ENCODE measurements at regions of chr12 and their contacts with region 1.

Region 1: GRCh38 chr12:131311764-131312163 is 358.1 kb downstream of the ADGRD1 start:
- DNase-seq: no peak
- ATAC-seq: no peak
- H3K4me3 ChIP-seq: no peak overlapping the region
- H3K27ac ChIP-seq: no peak overlapping the region
- H3K4me1 ChIP-seq: no peaks in the 10 kb centered on the region
- H3K27me3 ChIP-seq: peaks cover 0 to 54% (median 0%) of the 10 kb centered on the region in 9 donors
- CTCF ChIP-seq: no peak
- POLR2A ChIP-seq: no peak

Region 2: DNA sequence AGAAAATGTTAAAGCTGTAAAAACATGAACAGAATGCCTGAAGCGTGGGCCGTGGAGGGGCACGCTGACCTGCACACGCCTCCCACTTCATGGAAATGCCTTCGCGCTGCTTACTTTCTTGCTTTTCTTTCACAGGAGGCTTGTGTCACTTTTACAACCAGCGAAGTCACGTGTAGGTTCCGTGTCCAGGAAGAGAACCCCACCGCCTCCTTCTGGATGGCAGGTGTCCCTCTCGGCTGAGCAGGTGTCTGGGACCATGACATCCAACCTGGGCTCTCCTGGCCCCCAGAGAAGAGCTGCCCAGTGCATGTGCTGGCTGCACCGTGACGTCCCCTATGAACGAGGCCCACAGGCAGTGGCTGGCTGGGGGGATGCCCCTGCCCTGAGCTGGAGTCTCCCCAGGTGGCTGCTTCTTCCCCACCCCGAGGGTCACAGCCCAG is 54.1 kb after region 1 on chr12:
- intact Hi-C with region 1: no loop called
- DNase-seq: peak in 1 of 5 donors; percentile 29
- ATAC-seq: no peak
- H3K4me3 ChIP-seq: no peak overlapping the region
- H3K27ac ChIP-seq: no peak overlapping the region
- H3K4me1 ChIP-seq: no peaks in the 10 kb centered on the region
- H3K27me3 ChIP-seq: peaks cover 0 to 15% (median 0%) of the 10 kb centered on the region in 9 donors
- CTCF ChIP-seq: no peak
- POLR2A ChIP-seq: no peak

Region 3: DNA sequence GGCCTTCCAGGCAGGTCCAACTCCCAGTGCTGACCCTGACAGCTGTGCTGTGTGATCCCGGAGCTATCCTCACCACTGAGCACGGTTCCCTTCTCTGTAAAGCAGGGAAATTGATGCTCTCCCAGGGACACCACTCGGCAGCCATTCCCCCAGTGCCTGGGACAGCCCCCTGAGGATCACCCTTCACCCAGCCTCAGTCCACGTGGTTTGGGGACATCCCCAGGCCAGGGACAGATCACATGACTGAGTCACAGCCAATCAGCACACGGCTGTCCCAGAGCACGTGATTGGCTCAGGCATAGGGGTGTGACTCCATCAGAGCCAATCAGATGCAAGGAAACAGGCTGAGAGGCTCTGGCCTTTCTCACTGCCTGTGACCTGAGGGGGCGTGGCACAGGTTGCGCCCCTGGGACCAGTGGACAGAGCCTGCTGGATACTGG is 330.4 kb after region 1 on chr12:
- intact Hi-C with region 1: loop called in 4 of 10 experiments (anchors 5 kb)
- DNase-seq: peak in 1 of 5 donors; percentile 26
- ATAC-seq: no peak
- H3K4me3 ChIP-seq: no peak overlapping the region
- H3K27ac ChIP-seq: no peak overlapping the region
- H3K4me1 ChIP-seq: no peaks in the 10 kb centered on the region
- H3K27me3 ChIP-seq: peaks cover 0 to 52% (median 3%) of the 10 kb centered on the region in 9 donors
- CTCF ChIP-seq: no peak
- POLR2A ChIP-seq: no peak

Region 4: DNA sequence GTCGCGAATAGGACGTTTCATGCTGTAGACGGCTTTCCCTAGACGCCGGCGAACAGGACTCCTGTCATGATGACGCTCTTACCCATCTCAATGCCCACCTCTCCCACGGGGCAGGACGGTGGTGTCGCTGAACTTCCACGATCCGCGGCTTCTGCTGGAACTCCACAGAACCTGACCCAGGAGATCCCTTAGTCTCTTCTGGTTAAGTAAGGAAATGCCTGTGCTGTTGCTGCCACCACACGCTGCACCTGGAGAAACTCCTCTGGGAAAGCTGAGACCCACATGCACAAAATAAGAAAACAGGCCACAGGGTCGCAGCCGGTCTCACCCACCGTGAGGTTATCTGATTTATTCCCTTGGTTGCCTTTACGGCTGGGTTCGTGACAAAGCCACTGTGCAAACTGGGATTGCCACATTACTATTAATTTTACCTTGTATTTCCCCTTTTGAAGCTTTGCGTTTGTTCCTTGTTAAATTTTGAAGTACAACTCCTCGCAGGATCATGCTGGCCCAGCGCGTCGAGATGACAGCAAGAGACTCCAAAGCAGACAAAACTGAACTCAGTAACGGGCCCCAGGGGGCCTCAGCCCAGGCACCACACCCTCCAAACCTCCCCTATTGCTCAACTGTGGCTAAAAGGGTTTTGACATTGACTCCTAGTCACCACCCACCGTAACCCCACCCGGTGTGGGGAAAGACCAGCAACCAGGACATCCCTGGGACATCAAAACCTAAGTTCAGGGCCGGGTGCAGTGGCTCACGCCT is 507.2 kb after region 1 on chr12:
- intact Hi-C with region 1: loop called in 1 of 10 experiments (anchors 10 kb)
- DNase-seq: peak in 1 of 5 donors; percentile 31
- ATAC-seq: peak in 1 of 4 donors; percentile 65
- H3K4me3 ChIP-seq: no peak overlapping the region
- H3K27ac ChIP-seq: no peak overlapping the region
- H3K4me1 ChIP-seq: no peaks in the 10 kb centered on the region
- H3K27me3 ChIP-seq: peaks cover 0 to 7% (median 0%) of the 10 kb centered on the region in 9 donors
- CTCF ChIP-seq: no peak
- POLR2A ChIP-seq: no peak

Measured in heart left ventricle (tissue), 16 donors.